Motor neuron (in vitro differentiated cells): ENCODE measurements at regions of chr22 and their contacts with region 1.

Region 1: DNA sequence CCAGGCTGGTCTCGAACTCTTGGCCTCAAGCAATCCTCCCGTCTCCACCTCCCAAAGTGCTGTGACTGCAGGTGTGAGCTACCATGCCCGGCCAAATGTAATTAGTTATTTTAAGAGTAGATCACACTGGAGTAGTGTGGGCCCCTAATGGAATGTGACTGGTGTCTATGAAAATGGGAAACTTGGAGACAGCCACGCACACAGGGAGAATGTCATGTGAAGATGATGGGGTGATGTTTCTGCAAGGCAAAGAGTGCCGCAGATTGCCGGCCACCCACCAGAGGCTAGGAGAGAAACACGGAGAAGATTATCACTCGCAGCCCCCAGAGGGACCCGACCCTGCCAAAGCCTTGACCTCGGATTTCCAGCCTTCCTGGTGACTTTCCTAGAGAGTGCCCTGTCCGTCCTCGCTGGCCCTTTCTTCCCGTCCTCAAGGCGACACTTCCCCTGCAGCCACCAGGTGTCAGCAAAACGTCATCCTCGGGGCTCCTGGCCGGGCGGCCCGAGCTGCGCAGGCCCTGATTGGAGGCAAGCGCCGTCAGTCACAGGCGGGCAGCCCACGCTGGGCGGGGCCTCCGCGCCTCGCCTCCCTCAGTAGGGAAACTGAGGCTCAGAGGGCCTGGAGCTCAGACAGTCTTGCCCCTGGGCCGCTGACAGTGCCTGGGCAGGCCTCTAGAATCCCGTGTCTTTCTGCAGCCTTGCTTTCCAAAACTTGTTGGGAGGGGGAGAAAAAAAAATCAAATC is 16.3 kb downstream of the CRYBB2 start:
- ATAC-seq: peak; percentile 99 to 100 (median 100)
- H3K4me3 ChIP-seq: peak overlapping the region in 2 of 5 donors; percentile 4 to 17
- H3K27ac ChIP-seq: no peak overlapping the region
- H3K4me1 ChIP-seq: no peaks in the 10 kb centered on the region

Region 2: GRCh38 chr22:25334162-25334490 is 98.4 kb after region 1 on chr22:
- in situ Hi-C with region 1: loop called in 1 of 9 experiments (anchors 10 kb)
- ATAC-seq: peak in 4 of 8 experiments; percentile 71 to 94 (median 86)
- H3K4me3 ChIP-seq: no peak overlapping the region
- H3K27ac ChIP-seq: no peak overlapping the region
- H3K4me1 ChIP-seq: no peaks in the 10 kb centered on the region

Region 3: GRCh38 chr22:25546751-25547150 is 311.0 kb after region 1 on chr22:
- in situ Hi-C with region 1: loop called in 1 of 9 experiments (anchors 25 kb)
- ATAC-seq: peak in 6 of 8 experiments; percentile 19 to 54 (median 36)
- H3K4me3 ChIP-seq: no peak overlapping the region
- H3K27ac ChIP-seq: no peak overlapping the region
- H3K4me1 ChIP-seq: peaks cover 18 to 20% of the 10 kb centered on the region in 2 donors

Region 4: DNA sequence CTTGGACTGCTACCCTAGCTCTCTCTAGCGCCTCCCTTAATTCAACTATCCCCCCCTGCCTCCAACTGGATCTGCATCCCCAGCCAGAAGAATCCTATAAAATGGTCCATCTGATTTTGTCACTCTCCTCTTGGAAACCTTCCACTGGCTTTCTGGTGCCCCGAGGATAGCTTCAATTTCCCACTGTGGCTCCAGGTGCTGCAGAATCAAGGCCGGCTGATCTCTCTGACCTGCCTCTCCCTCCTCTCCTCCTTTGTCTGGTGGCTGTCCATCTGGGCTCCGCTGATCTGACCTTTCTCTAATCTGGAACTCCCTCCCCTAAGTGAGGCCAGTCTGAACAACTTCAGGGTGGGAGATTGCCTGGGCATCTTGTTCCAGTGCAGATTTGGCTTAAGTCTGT is 322.6 kb after region 1 on chr22:
- in situ Hi-C with region 1: no loop called
- ATAC-seq: no peak
- H3K4me3 ChIP-seq: no peak overlapping the region
- H3K27ac ChIP-seq: no peak overlapping the region
- H3K4me1 ChIP-seq: peaks cover 10 to 12% of the 10 kb centered on the region in 2 donors